ENCODE measurements at regions of chr7 and their contacts with region 1.

Region 1: DNA sequence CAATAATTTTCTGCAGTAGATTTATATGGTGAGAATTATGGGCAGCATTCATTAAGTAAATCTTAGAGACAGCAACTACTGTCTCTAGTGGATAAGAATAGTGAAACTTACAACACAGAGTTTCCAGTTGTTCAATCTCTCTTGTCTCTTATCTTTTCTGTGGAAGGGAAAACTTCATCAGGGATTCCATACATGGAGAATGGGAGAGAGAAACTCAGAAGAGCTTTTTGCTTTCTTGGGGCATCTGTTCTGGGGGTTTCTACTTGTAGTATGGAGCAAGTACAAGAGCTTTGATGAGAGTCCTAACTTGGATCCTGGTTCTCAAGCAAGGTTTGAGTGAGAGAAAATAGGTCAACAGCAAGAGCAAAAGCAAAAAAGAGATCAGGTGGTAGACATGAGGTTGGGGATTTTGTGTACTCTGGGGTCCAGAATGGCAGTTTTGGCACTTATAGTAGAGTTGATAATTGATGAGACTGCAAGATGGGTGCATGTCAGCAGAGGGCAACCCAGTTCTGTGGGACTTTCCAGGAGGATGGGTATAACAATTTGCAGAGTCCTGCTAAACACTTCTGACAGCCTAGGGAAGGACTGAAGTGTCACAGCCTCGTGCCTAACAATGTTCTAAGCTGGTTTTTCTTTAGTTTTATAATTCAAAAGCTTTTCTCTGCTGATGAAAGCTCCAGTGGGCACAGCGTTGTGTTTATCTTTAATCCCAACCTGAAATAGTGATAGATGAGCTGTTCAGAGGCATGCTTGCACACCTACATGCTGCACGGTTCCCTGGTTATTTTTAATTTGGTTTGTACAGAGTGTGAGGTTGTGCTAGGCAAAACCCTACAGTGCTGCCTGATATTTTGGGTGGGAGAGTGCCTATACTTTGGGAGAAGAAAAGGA is 32.0 kb upstream of the STRIP2 start:
- DNase-seq: peak; percentile 2
- H3K4me3 Mint-ChIP-seq: no peak overlapping the region
- H3K27ac Mint-ChIP-seq: peak overlapping the region; percentile 0
- H3K4me1 Mint-ChIP-seq: peaks cover 44% of the 10 kb centered on the region
- H3K27me3 Mint-ChIP-seq: no peaks in the 10 kb centered on the region

Region 2: GRCh38 chr7:129332284-129333035 is 69.8 kb before region 1 on chr7:
- intact Hi-C with region 1: no loop called
- DNase-seq: no peak
- H3K4me3 Mint-ChIP-seq: no peak overlapping the region
- H3K27ac Mint-ChIP-seq: no peak overlapping the region
- H3K4me1 Mint-ChIP-seq: no peaks in the 10 kb centered on the region
- H3K27me3 Mint-ChIP-seq: no peaks in the 10 kb centered on the region

Region 3: GRCh38 chr7:129386506-129386905 is 15.7 kb before region 1 on chr7:
- intact Hi-C with region 1: loop called (anchors 2 kb)
- DNase-seq: no peak
- H3K4me3 Mint-ChIP-seq: no peak overlapping the region
- H3K27ac Mint-ChIP-seq: no peak overlapping the region
- H3K4me1 Mint-ChIP-seq: peaks cover 43% of the 10 kb centered on the region
- H3K27me3 Mint-ChIP-seq: no peaks in the 10 kb centered on the region

Region 4: GRCh38 chr7:129417071-129417470 is 14.9 kb after region 1 on chr7:
- intact Hi-C with region 1: no loop called
- DNase-seq: no peak
- H3K4me3 Mint-ChIP-seq: no peak overlapping the region
- H3K27ac Mint-ChIP-seq: no peak overlapping the region
- H3K4me1 Mint-ChIP-seq: no peaks in the 10 kb centered on the region
- H3K27me3 Mint-ChIP-seq: no peaks in the 10 kb centered on the region

Region 5: GRCh38 chr7:129468087-129468486 is 65.9 kb after region 1 on chr7:
- intact Hi-C with region 1: loop called (anchors 1 kb)
- DNase-seq: no peak
- H3K4me3 Mint-ChIP-seq: no peak overlapping the region
- H3K27ac Mint-ChIP-seq: no peak overlapping the region
- H3K4me1 Mint-ChIP-seq: peaks cover 31% of the 10 kb centered on the region
- H3K27me3 Mint-ChIP-seq: no peaks in the 10 kb centered on the region

Region 6: GRCh38 chr7:129739427-129739826 is 337.2 kb after region 1 on chr7:
- intact Hi-C with region 1: no loop called
- DNase-seq: no peak
- H3K4me3 Mint-ChIP-seq: no peak overlapping the region
- H3K27ac Mint-ChIP-seq: no peak overlapping the region
- H3K4me1 Mint-ChIP-seq: peaks cover 9% of the 10 kb centered on the region
- H3K27me3 Mint-ChIP-seq: no peaks in the 10 kb centered on the region